Caco-2 (cell line): ENCODE measurements at regions of chr19 and their contacts with region 1.

Region 1: GRCh38 chr19:42244347-42245220 is 2.2 kb upstream of the GSK3A start:
- DNase-seq: peak; percentile 95
- H3K4me3 ChIP-seq: peak overlapping the region; percentile 77
- H3K4me3 Mint-ChIP-seq: peak overlapping the region; percentile 85
- H3K27ac Mint-ChIP-seq: peak overlapping the region; percentile 66
- H3K4me1 ChIP-seq: peaks cover 10% of the 10 kb centered on the region; the same call in 1 of the 2 replicates
- H3K4me1 Mint-ChIP-seq: peaks cover 20% of the 10 kb centered on the region
- H3K27me3 ChIP-seq: no peaks in the 10 kb centered on the region
- H3K27me3 Mint-ChIP-seq: no peaks in the 10 kb centered on the region
- CTCF ChIP-seq: peak; percentile 69 to 75

Region 2: GRCh38 chr19:42219812-42220750 is 24.5 kb before region 1 on chr19 and contains the start of gene ZNF526:
- CTCF ChIA-PET with region 1: interaction called, 3 read pairs
- POLR2A ChIA-PET with region 1: interaction called, 23 read pairs
- intact Hi-C with region 1: loop called (anchors 1 kb)
- DNase-seq: peak; percentile 99
- H3K4me3 ChIP-seq: peak within 1 kb of the TSS; percentile 79
- H3K4me3 Mint-ChIP-seq: peak within 1 kb of the TSS; percentile 93
- H3K27ac Mint-ChIP-seq: peak within 1 kb of the TSS; percentile 94
- H3K4me1 ChIP-seq: peaks cover 25% of the 10 kb centered on the region
- H3K4me1 Mint-ChIP-seq: peaks cover 22% of the 10 kb centered on the region
- H3K27me3 ChIP-seq: no peaks in the 10 kb centered on the region
- H3K27me3 Mint-ChIP-seq: no peaks in the 10 kb centered on the region
- CTCF ChIP-seq: peak in 1 of 2 experiments; percentile 2
- total RNA-seq, gene ZNF526: 19.4 and 22.6 TPM in 2 replicates

Region 3: DNA sequence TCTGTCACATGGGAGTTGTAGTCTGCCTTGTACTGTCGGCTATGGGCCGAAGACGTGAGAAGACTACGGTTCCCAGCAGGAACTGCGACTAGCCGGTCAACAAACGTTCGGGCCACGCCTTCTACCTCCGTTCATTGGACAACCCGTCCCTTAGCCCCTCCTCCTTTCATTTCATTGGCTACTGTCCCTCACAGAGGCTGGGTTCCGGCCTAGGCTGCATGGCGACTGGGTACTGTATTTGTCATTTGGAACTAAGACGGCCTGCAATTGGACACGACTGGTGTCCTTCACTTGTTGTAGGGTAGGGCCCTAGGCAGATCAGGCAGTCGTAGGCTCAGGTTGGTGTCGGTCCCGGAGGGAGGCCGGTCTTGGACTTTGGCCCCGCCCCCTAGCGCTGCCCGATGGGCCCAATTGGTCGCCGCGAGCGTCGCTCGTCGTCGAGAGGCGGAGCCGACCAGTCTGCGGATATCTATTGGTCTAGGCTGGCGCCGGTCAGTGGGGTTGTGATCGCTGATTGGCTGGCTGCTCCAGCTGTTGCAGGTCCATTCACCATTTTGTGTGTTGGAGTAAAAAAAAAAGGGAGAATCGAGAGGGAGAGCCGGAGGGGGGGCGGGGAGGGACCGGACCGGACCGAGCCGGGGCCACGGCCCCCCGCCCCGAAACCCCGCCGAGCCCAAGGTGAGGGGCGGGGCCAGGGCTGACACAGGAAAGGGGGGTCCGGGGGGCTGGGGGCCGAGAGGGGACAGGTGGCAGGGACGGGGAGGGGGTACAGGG is 24.3 kb after region 1 on chr19 and contains the start of gene CIC:
- CTCF ChIA-PET with region 1: no interaction called
- POLR2A ChIA-PET with region 1: interaction called, 5 read pairs
- intact Hi-C with region 1: loop called (anchors 1 kb)
- DNase-seq: peak; percentile 99 to 100
- H3K4me3 ChIP-seq: peak within 1 kb of the TSS; percentile 74
- H3K4me3 Mint-ChIP-seq: no peak within 1 kb of the TSS
- H3K27ac Mint-ChIP-seq: no peak within 1 kb of the TSS
- H3K4me1 ChIP-seq: peaks cover 10% of the 10 kb centered on the region; the same call in 1 of the 2 replicates
- H3K4me1 Mint-ChIP-seq: no peaks in the 10 kb centered on the region
- H3K27me3 ChIP-seq: no peaks in the 10 kb centered on the region
- H3K27me3 Mint-ChIP-seq: no peaks in the 10 kb centered on the region
- CTCF ChIP-seq: no peak
- total RNA-seq, gene CIC: 44.8 and 47.8 TPM in 2 replicates

Region 4: DNA sequence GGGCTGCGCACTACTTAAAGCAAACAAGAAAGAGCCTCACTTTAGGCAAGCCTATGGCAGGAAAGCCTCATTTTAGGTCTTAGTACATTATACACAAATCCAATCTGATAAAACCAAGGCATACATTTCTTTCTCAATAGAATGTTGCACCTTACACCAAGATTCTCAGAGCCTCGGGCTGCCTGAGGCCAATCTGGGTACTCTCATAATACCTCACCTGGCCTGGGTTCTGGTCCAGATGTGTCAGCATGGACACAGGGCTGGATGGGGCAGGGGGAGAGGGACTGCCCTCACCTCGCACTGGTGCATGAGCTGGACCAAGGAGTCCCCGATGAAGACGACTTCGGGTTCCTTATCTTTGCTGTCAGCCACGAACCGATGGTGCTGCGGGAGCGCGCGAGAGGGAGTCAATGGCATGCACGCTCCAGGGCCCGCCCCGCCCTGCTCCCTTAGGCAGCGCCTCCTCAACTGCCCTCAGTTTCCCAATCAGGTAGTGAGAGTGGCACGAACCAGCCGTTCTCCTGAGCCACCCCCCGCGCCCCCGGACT is 57.1 kb after region 1 on chr19 and contains the start of gene PRR19:
- CTCF ChIA-PET with region 1: interaction called, 7 read pairs
- POLR2A ChIA-PET with region 1: no interaction called
- intact Hi-C with region 1: loop called (anchors 1 kb)
- DNase-seq: no peak
- H3K4me3 ChIP-seq: peak within 1 kb of the TSS; percentile 64
- H3K4me3 Mint-ChIP-seq: peak within 1 kb of the TSS; percentile 98
- H3K27ac Mint-ChIP-seq: peak within 1 kb of the TSS; percentile 94
- H3K4me1 ChIP-seq: peaks cover 10% of the 10 kb centered on the region
- H3K4me1 Mint-ChIP-seq: peaks cover 14% of the 10 kb centered on the region
- H3K27me3 ChIP-seq: no peaks in the 10 kb centered on the region
- H3K27me3 Mint-ChIP-seq: no peaks in the 10 kb centered on the region
- CTCF ChIP-seq: no peak
- total RNA-seq, gene PRR19: 2.8 and 2.9 TPM in 2 replicates